Gastrocnemius medialis (tissue), 4 donors: ENCODE measurements at regions of chr2 and their contacts with region 1.

Region 1: DNA sequence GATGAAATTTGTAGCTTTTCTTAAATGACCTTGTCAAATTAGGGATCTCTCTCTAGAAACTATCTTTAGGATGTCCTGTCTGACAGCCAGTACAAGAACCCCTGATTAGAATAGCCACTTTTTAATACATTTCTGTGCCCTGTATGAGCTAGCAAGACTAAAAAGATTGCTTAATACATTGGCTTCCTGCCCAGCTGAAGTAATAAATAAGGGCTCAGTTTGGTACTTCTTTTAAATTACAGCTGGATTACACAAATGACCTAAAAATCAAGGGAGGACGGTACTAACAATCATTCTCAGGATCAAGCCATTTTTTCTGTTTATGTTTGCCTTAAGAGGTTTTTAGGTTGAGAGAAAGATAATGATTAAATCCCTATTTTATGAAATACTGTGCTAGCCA is 11.6 kb upstream of the OLA1 start:
- DNase-seq: no peak
- ATAC-seq: no peak
- H3K4me3 ChIP-seq: no peak overlapping the region
- H3K27ac ChIP-seq: no peak overlapping the region
- H3K4me1 ChIP-seq: no peaks in the 10 kb centered on the region
- H3K27me3 ChIP-seq: no peaks in the 10 kb centered on the region
- CTCF ChIP-seq: no peak
- POLR2A ChIP-seq: no peak

Region 2: GRCh38 chr2:172339371-172340010 is 1920.5 kb before region 1 on chr2:
- in situ Hi-C with region 1: no loop called
- intact Hi-C with region 1: loop called (anchors 10 kb)
- DNase-seq: peak in 1 of 2 donors; percentile 19
- ATAC-seq: peak; percentile 85 to 87
- H3K4me3 ChIP-seq: no peak overlapping the region
- H3K27ac ChIP-seq: peak overlapping the region; percentile 46 to 68 (median 58)
- H3K4me1 ChIP-seq: peaks cover 19 to 21% of the 10 kb centered on the region in 2 donors
- H3K27me3 ChIP-seq: no peaks in the 10 kb centered on the region
- CTCF ChIP-seq: no peak
- POLR2A ChIP-seq: no peak

Region 3: GRCh38 chr2:174235680-174236079 is 24.3 kb before region 1 on chr2:
- in situ Hi-C with region 1: no loop called
- intact Hi-C with region 1: no loop called
- DNase-seq: no peak
- ATAC-seq: no peak
- H3K4me3 ChIP-seq: no peak overlapping the region
- H3K27ac ChIP-seq: no peak overlapping the region
- H3K4me1 ChIP-seq: no peaks in the 10 kb centered on the region
- H3K27me3 ChIP-seq: no peaks in the 10 kb centered on the region
- CTCF ChIP-seq: no peak
- POLR2A ChIP-seq: no peak

Region 4: DNA sequence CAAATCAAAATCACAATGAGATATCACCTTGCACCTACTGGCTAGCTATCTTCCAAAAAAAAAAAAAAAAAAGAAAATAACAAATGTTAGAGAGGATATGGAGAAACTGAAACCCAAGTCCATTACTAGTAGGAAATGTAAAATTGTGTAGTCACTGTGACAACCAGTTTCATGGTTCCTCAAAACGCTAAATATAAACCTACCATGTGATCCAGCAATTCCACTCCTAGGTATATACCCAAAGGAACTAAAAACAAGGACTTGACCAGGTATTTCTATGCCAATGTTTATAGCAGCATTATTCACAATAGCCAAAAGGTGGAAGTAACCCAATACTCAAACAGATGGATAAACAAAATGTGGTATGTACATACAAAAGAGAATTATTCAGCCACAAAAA is 123.8 kb after region 1 on chr2:
- in situ Hi-C with region 1: no loop called
- intact Hi-C with region 1: no loop called
- DNase-seq: no peak
- ATAC-seq: no peak
- H3K4me3 ChIP-seq: no peak overlapping the region
- H3K27ac ChIP-seq: no peak overlapping the region
- H3K4me1 ChIP-seq: no peaks in the 10 kb centered on the region
- H3K27me3 ChIP-seq: no peaks in the 10 kb centered on the region
- CTCF ChIP-seq: no peak
- POLR2A ChIP-seq: no peak